ENCODE measurements at regions of chr2 and their contacts with region 1.

Region 1: DNA sequence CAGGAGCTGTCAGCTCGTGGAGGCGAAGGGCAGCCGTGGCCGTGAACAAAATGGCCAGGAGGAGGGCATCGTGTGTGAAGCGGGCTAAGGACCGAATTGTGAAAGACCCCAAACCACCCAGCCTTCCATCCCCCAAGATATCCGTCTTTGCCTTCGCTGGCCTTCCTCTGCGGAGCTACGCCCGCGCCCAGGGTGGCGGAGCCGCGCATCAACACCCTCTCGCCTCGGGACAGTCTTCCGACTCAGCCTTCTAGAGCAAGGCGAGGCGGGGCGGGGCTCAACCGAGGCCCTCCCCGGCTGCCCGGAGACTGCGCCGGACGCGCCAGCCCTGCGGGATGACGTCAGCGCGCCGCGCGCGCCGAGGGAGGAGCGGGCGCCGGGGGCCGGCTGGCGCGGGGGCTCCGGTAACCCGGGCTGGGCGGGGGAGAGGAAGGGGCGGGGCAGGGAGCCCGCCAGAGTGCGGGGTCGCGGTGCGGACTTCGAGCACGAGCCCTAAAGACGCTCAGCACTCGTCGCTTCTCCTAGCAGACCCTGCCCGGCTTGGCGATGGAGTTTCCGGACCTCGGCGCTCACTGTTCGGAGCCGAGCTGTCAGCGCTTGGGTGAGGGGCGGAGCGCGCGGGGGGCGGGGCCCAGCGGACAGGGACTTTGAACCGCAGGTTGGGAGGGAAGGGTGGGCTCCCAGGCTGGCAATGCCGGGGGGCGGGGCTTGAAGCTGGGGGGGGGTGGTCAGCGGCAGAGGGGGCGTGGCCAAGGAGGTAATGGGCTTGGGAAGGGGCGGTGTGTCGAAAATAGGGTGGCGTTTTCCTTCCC is at the start of gene ZFAND2B:
- DNase-seq: peak; percentile 96 to 98 (median 97)
- ATAC-seq: peak; percentile 89 to 95 (median 92)
- H3K4me3 ChIP-seq: peak within 1 kb of the TSS; percentile 60 to 84 (median 82)
- H3K27ac ChIP-seq: peak within 1 kb of the TSS; percentile 80 to 95 (median 93)
- H3K4me1 ChIP-seq: peaks cover 0 to 24% (median 8%) of the 10 kb centered on the region in 4 donors
- H3K27me3 ChIP-seq: no peaks in the 10 kb centered on the region
- CTCF ChIP-seq: peak in 1 of 4 donors; percentile 26
- POLR2A ChIP-seq: peak; percentile 96
- total RNA-seq, gene ZFAND2B: 20.7 to 32.3 (median 28.8) TPM

Region 2: GRCh38 chr2:219160186-219161017 is 46.2 kb before region 1 on chr2 and contains the start of gene NHEJ1:
- intact Hi-C with region 1: loop called in 1 of 2 experiments (anchors 5 kb)
- DNase-seq: peak; percentile 97 to 99 (median 98)
- ATAC-seq: peak; percentile 95 to 99 (median 96)
- H3K4me3 ChIP-seq: peak within 1 kb of the TSS; percentile 58 to 70 (median 66)
- H3K27ac ChIP-seq: peak within 1 kb of the TSS; percentile 84 to 89 (median 86)
- H3K4me1 ChIP-seq: peaks cover 0 to 11% (median 2%) of the 10 kb centered on the region in 4 donors
- H3K27me3 ChIP-seq: no peaks in the 10 kb centered on the region
- CTCF ChIP-seq: peak; percentile 96 to 100 (median 98)
- POLR2A ChIP-seq: peak; percentile 60
- total RNA-seq, gene NHEJ1: 5.8 to 16.7 (median 10.9) TPM

Region 3: GRCh38 chr2:219171231-219171651 is 35.4 kb before region 1 on chr2:
- intact Hi-C with region 1: loop called in 1 of 2 experiments (anchors 5 kb)
- DNase-seq: peak in 1 of 3 donors; percentile 54
- ATAC-seq: peak; percentile 62 to 71 (median 66)
- H3K4me3 ChIP-seq: no peak overlapping the region
- H3K27ac ChIP-seq: peak overlapping the region in 2 of 3 donors; percentile 2 to 18
- H3K4me1 ChIP-seq: peaks cover 0 to 29% (median 6%) of the 10 kb centered on the region in 4 donors
- H3K27me3 ChIP-seq: no peaks in the 10 kb centered on the region
- CTCF ChIP-seq: peak; percentile 53 to 74 (median 68)
- POLR2A ChIP-seq: no peak

Region 4: GRCh38 chr2:219578790-219579616 is 372.4 kb after region 1 on chr2:
- intact Hi-C with region 1: no loop called
- DNase-seq: no peak
- ATAC-seq: peak in 3 of 4 donors; percentile 35 to 43 (median 38)
- H3K4me3 ChIP-seq: no peak overlapping the region
- H3K27ac ChIP-seq: no peak overlapping the region
- H3K4me1 ChIP-seq: no peaks in the 10 kb centered on the region
- H3K27me3 ChIP-seq: no peaks in the 10 kb centered on the region
- CTCF ChIP-seq: no peak
- POLR2A ChIP-seq: no peak